B cell (primary cell): ENCODE measurements at regions of chr17 and their contacts with region 1.

Region 1: GRCh38 chr17:75749545-75750389 is 15.2 kb downstream of the GALK1 start:
- DNase-seq: peak; percentile 91
- ATAC-seq: peak; percentile 76
- H3K4me3 ChIP-seq: no peak overlapping the region
- H3K4me3 Mint-ChIP-seq: peak overlapping the region; percentile 35
- H3K27ac ChIP-seq: no peak overlapping the region
- H3K27ac Mint-ChIP-seq: peak overlapping the region; percentile 64
- H3K4me1 ChIP-seq: peaks cover 9 to 34% of the 10 kb centered on the region in 2 donors
- H3K4me1 Mint-ChIP-seq: peaks cover 21% of the 10 kb centered on the region
- H3K27me3 ChIP-seq: no peaks in the 10 kb centered on the region
- H3K27me3 Mint-ChIP-seq: peaks cover 4% of the 10 kb centered on the region
- CTCF ChIP-seq: peak; percentile 86

Region 2: GRCh38 chr17:75524269-75524952 is 225.4 kb before region 1 on chr17:
- CTCF ChIA-PET with region 1: no interaction called
- POLR2A ChIA-PET with region 1: no interaction called
- intact Hi-C with region 1: no loop called
- DNase-seq: no peak
- ATAC-seq: no peak
- H3K4me3 ChIP-seq: peak overlapping the region in 4 of 5 experiments; percentile 72 to 80 (median 77)
- H3K4me3 Mint-ChIP-seq: peak overlapping the region; percentile 78
- H3K27ac ChIP-seq: no peak overlapping the region
- H3K27ac Mint-ChIP-seq: no peak overlapping the region
- H3K4me1 ChIP-seq: peaks cover 15 to 18% of the 10 kb centered on the region in 2 donors
- H3K4me1 Mint-ChIP-seq: peaks cover 14% of the 10 kb centered on the region
- H3K27me3 ChIP-seq: peaks cover 0 to 7% (median 0%) of the 10 kb centered on the region in 4 experiments
- H3K27me3 Mint-ChIP-seq: no peaks in the 10 kb centered on the region
- CTCF ChIP-seq: no peak

Region 3: DNA sequence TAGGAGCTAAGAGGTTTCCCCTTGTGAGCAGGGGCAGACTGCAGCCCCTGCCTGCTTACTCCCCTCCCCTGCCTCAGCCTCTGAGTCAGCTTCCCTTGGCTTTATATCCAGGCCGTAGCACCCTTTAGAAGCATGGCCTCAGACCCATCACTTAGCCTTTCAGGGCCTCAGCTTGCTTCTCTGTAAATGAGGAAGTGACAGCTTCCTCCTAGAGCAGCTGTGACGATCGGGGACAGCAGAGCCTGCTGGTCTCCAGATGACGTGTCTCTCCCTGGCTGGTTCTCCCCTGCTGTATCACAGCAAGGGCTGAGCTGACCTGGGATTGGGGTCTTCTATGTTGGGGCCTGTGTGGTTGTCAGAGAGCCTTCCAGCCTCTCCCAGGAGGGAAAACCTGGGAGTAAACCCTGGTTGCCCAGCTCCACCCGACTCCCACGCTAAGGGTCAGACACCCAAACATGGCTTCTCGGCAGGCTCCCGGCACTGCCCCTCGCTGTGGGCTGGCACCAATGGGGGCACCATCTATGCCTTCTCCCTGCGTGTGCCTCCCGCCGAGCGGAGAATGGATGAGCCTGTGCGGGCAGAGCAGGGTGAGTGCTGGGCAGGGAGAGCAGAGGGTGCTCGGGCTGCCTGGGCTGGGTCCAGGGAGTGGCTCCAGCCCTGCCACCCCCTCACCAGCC is 178.4 kb before region 1 on chr17:
- CTCF ChIA-PET with region 1: interaction called, 3 read pairs
- POLR2A ChIA-PET with region 1: interaction called, 12 read pairs
- intact Hi-C with region 1: no loop called
- DNase-seq: peak; percentile 88
- ATAC-seq: peak; percentile 97
- H3K4me3 ChIP-seq: peak overlapping the region in 2 of 5 experiments; percentile 28 to 35
- H3K4me3 Mint-ChIP-seq: peak overlapping the region; percentile 71
- H3K27ac ChIP-seq: peak overlapping the region; percentile 80 to 93
- H3K27ac Mint-ChIP-seq: peak overlapping the region; percentile 96
- H3K4me1 ChIP-seq: peaks cover 24 to 28% of the 10 kb centered on the region in 2 donors
- H3K4me1 Mint-ChIP-seq: peaks cover 23% of the 10 kb centered on the region
- H3K27me3 ChIP-seq: no peaks in the 10 kb centered on the region
- H3K27me3 Mint-ChIP-seq: no peaks in the 10 kb centered on the region
- CTCF ChIP-seq: no peak

Region 4: DNA sequence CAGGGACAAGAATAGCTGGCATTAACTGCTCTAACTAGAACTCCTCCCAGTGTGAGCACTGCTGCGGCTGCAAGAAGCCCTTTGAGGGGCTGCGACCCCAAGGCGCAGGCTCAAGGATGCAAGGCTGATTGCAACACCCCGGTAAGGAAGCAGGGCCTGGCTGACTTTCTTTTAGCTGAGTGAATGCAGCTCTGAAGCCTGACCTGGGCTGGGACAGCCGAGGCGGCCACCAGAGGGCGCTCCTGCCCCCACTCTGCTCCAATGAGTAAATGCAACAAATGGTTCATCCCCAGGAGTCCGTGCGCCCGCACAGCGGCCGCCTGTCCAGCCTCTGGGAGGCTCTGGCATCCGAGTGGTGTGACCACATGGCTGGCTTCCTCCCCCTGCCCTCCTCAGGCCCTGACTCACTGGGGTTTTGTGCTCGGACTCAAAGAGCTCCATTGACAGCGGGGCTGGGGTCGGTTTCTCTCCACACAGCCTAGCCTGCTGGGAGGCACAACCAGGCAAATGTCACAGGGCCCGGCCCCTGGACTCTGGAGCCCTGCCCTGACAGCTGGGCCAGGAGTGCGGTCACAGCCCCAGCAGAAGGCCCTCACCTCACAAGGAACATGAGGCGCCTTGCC is 116.8 kb before region 1 on chr17 and contains the start of gene SMIM5:
- CTCF ChIA-PET with region 1: interaction called, 389 read pairs
- POLR2A ChIA-PET with region 1: interaction called, 8 read pairs
- intact Hi-C with region 1: loop called (anchors 1 kb)
- DNase-seq: peak; percentile 86
- ATAC-seq: peak; percentile 85
- H3K4me3 ChIP-seq: no peak within 1 kb of the TSS
- H3K4me3 Mint-ChIP-seq: no peak within 1 kb of the TSS
- H3K27ac ChIP-seq: no peak within 1 kb of the TSS
- H3K27ac Mint-ChIP-seq: no peak within 1 kb of the TSS
- H3K4me1 ChIP-seq: peaks cover 9 to 18% of the 10 kb centered on the region in 2 donors
- H3K4me1 Mint-ChIP-seq: peaks cover 13% of the 10 kb centered on the region
- H3K27me3 ChIP-seq: no peaks in the 10 kb centered on the region
- H3K27me3 Mint-ChIP-seq: no peaks in the 10 kb centered on the region
- CTCF ChIP-seq: peak; percentile 95
- total RNA-seq, gene SMIM5: 0.61 and 0.62 TPM in 2 replicates

Region 5: GRCh38 chr17:75673487-75673886 is 76.3 kb before region 1 on chr17:
- CTCF ChIA-PET with region 1: interaction called, 144 read pairs
- POLR2A ChIA-PET with region 1: no interaction called
- intact Hi-C with region 1: loop called (anchors 1 kb)
- DNase-seq: no peak
- ATAC-seq: no peak
- H3K4me3 ChIP-seq: no peak overlapping the region
- H3K4me3 Mint-ChIP-seq: no peak overlapping the region
- H3K27ac ChIP-seq: no peak overlapping the region
- H3K27ac Mint-ChIP-seq: no peak overlapping the region
- H3K4me1 ChIP-seq: peaks cover 0 to 2% of the 10 kb centered on the region in 2 donors
- H3K4me1 Mint-ChIP-seq: peaks cover 20% of the 10 kb centered on the region
- H3K27me3 ChIP-seq: no peaks in the 10 kb centered on the region
- H3K27me3 Mint-ChIP-seq: no peaks in the 10 kb centered on the region
- CTCF ChIP-seq: no peak

Region 6: GRCh38 chr17:75764711-75765421 is 15.1 kb after region 1 on chr17 and contains the start of gene GALK1:
- CTCF ChIA-PET with region 1: interaction called, 87 read pairs
- POLR2A ChIA-PET with region 1: interaction called, 23 read pairs
- intact Hi-C with region 1: no loop called
- DNase-seq: peak; percentile 88
- ATAC-seq: peak; percentile 91
- H3K4me3 ChIP-seq: peak within 1 kb of the TSS; percentile 38 to 88 (median 83)
- H3K4me3 Mint-ChIP-seq: peak within 1 kb of the TSS; percentile 85
- H3K27ac ChIP-seq: peak within 1 kb of the TSS; percentile 15 to 72
- H3K27ac Mint-ChIP-seq: peak within 1 kb of the TSS; percentile 83
- H3K4me1 ChIP-seq: peaks cover 14 to 23% of the 10 kb centered on the region in 2 donors
- H3K4me1 Mint-ChIP-seq: peaks cover 18% of the 10 kb centered on the region
- H3K27me3 ChIP-seq: no peaks in the 10 kb centered on the region
- H3K27me3 Mint-ChIP-seq: no peaks in the 10 kb centered on the region
- CTCF ChIP-seq: peak; percentile 78
- total RNA-seq, gene GALK1: 29.8 and 33.9 TPM in 2 replicates

Region 7: DNA sequence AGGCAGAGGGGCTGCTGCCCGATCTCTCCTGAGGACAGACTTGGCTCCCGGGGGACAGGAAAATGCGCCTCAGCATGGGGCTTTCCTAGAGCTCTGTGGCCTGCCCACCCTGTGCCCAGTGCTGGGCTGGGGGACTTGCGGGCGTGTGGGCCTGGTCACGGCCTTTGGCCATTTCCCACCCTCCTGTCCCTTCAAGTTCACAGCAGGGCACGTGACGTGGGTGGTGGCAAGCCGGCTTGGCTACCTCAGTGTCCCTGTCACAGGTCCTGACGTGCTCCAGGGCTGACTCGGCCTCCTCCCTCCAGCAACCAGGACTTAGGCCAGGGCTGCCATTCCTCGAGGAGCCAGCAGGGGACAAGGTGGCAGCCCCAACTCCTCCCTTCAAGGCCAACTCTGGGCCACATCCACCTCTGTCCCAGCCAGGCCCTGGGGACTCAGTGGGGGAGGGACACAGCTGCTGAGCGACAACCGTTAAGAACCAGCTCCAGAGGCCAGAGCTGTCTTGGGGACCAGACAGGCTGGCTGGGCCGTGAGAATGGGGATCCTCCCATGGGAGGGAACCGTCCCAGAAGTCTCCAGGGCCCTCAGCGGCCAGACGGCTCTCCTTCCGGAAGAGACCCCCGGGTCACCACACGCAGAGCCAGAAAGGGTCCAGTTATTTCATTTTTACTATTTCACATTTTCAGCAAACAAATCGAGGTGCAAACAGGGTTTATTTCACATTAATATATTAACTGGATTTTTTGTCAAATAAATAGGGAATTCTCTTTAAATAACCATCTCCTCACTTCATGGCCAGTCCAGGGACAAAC is 95.5 kb after region 1 on chr17:
- CTCF ChIA-PET with region 1: interaction called, 12 read pairs
- POLR2A ChIA-PET with region 1: interaction called, 6 read pairs
- intact Hi-C with region 1: no loop called
- DNase-seq: peak; percentile 86
- ATAC-seq: peak; percentile 87
- H3K4me3 ChIP-seq: peak overlapping the region in 4 of 5 experiments; percentile 72 to 86 (median 78)
- H3K4me3 Mint-ChIP-seq: peak overlapping the region; percentile 94
- H3K27ac ChIP-seq: peak overlapping the region; percentile 92 to 93
- H3K27ac Mint-ChIP-seq: peak overlapping the region; percentile 97
- H3K4me1 ChIP-seq: peaks cover 17 to 43% of the 10 kb centered on the region in 2 donors
- H3K4me1 Mint-ChIP-seq: peaks cover 26% of the 10 kb centered on the region
- H3K27me3 ChIP-seq: no peaks in the 10 kb centered on the region
- H3K27me3 Mint-ChIP-seq: no peaks in the 10 kb centered on the region
- CTCF ChIP-seq: peak; percentile 83